Heart left ventricle (tissue), 16 donors: ENCODE measurements at regions of chr12 and their contacts with region 1.

Region 1: GRCh38 chr12:110224379-110225304 is 56.4 kb upstream of the ATP2A2 start:
- DNase-seq: no peak
- ATAC-seq: peak in 3 of 4 donors; percentile 55 to 67 (median 62)
- H3K4me3 ChIP-seq: peak overlapping the region in 9 of 12 donors; percentile 6 to 46 (median 22)
- H3K27ac ChIP-seq: peak overlapping the region in 11 of 12 donors; percentile 20 to 75 (median 68)
- H3K4me1 ChIP-seq: peaks cover 0 to 58% (median 22%) of the 10 kb centered on the region in 12 donors
- H3K27me3 ChIP-seq: no peaks in the 10 kb centered on the region
- CTCF ChIP-seq: peak; percentile 33 to 71 (median 56)
- POLR2A ChIP-seq: no peak

Region 2: GRCh38 chr12:110093631-110094311 is 130.9 kb before region 1 on chr12:
- intact Hi-C with region 1: loop called in 1 of 10 experiments (anchors 10 kb)
- DNase-seq: no peak
- ATAC-seq: no peak
- H3K4me3 ChIP-seq: no peak overlapping the region
- H3K27ac ChIP-seq: no peak overlapping the region
- H3K4me1 ChIP-seq: no peaks in the 10 kb centered on the region
- H3K27me3 ChIP-seq: peaks cover 0 to 5% (median 0%) of the 10 kb centered on the region in 9 donors
- CTCF ChIP-seq: no peak
- POLR2A ChIP-seq: no peak

Region 3: GRCh38 chr12:110124184-110124995 is 100.3 kb before region 1 on chr12 and contains the start of gene IFT81:
- intact Hi-C with region 1: loop called in 1 of 10 experiments (anchors 5 kb)
- DNase-seq: peak; percentile 96 to 98 (median 96)
- ATAC-seq: peak; percentile 96 to 98 (median 97)
- H3K4me3 ChIP-seq: peak within 1 kb of the TSS; percentile 71 to 99 (median 92)
- H3K27ac ChIP-seq: peak within 1 kb of the TSS; percentile 79 to 94 (median 90)
- H3K4me1 ChIP-seq: peaks cover 0 to 21% (median 7%) of the 10 kb centered on the region in 12 donors
- H3K27me3 ChIP-seq: no peaks in the 10 kb centered on the region
- CTCF ChIP-seq: peak in 3 of 12 donors; percentile 6 to 10 (median 8)
- POLR2A ChIP-seq: peak in 1 of 2 donors; percentile 45
- total RNA-seq, gene IFT81: 6.1 to 9.8 (median 8.9) TPM

Region 4: GRCh38 chr12:110270125-110270962 is 45.7 kb after region 1 on chr12:
- intact Hi-C with region 1: loop called in 1 of 10 experiments (anchors 10 kb)
- DNase-seq: peak in 4 of 5 donors; percentile 55 to 75 (median 67)
- ATAC-seq: peak; percentile 67 to 94 (median 79)
- H3K4me3 ChIP-seq: no peak overlapping the region
- H3K27ac ChIP-seq: peak overlapping the region; percentile 14 to 80 (median 41)
- H3K4me1 ChIP-seq: peaks cover 4 to 47% (median 26%) of the 10 kb centered on the region in 12 donors
- H3K27me3 ChIP-seq: no peaks in the 10 kb centered on the region
- CTCF ChIP-seq: no peak
- POLR2A ChIP-seq: no peak

Region 5: DNA sequence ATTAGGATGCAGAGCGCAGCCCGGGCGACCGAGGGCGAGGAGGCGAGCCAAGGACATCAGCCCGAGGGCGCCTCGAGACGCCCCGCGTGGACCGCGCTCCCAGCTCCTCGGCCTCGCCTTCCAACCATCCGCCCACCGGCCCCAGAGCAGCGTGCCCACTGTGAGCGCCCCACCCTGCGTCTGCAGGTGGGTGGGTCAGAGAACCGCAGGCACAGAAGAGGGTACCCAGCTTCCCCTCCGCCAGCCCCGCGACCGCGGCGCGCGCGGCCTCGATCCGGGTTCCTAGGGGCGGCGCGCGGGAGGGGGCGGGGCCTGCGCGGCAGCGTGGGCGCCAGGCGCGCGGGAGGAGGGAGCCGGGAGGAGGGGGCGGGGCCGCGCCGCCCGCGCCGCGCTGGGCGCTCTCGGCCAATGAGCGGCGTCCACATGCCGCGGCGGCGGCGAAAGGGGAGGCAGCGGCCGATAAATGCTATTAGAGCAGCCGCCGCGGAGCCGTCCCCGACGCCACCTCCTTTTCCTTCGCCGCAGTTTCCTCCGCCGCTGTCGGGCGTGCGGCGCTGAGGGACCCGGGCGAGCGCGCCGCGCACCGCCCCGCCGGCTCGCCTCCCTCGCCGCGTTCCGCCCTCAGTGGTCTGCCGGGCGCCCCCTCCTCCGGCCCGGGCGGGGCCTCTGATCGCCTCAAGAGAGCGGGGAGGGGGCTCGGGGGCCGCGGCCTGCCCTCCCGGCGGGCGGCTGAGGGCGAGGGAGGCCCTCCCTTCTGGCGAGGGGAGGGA is 56.3 kb after region 1 on chr12 and contains the start of gene ATP2A2:
- intact Hi-C with region 1: loop called in 7 of 10 experiments (anchors 2 to 10 kb)
- DNase-seq: peak; percentile 92 to 96 (median 92)
- ATAC-seq: peak; percentile 69 to 93 (median 84)
- H3K4me3 ChIP-seq: peak within 1 kb of the TSS; percentile 76 to 96 (median 92)
- H3K27ac ChIP-seq: peak within 1 kb of the TSS; percentile 91 to 100 (median 98)
- H3K4me1 ChIP-seq: peaks cover 0 to 51% (median 34%) of the 10 kb centered on the region in 12 donors
- H3K27me3 ChIP-seq: no peaks in the 10 kb centered on the region
- CTCF ChIP-seq: peak in 1 of 12 donors; percentile 1
- POLR2A ChIP-seq: peak; percentile 71 to 99
- total RNA-seq, gene ATP2A2: 1,194 to 2,963 (median 1,871) TPM